ENCODE measurements at regions of chr5 and their contacts with region 1.

Region 1: GRCh38 chr5:113813466-113813865 is 300.0 kb downstream of the YTHDC2 start:
- DNase-seq: no peak
- H3K4me3 ChIP-seq: no peak overlapping the region
- H3K27ac ChIP-seq: no peak overlapping the region
- H3K4me1 ChIP-seq: peaks cover 12% of the 10 kb centered on the region
- H3K27me3 ChIP-seq: no peaks in the 10 kb centered on the region
- CTCF ChIP-seq: no peak
- POLR2A ChIP-seq: no peak

Region 2: DNA sequence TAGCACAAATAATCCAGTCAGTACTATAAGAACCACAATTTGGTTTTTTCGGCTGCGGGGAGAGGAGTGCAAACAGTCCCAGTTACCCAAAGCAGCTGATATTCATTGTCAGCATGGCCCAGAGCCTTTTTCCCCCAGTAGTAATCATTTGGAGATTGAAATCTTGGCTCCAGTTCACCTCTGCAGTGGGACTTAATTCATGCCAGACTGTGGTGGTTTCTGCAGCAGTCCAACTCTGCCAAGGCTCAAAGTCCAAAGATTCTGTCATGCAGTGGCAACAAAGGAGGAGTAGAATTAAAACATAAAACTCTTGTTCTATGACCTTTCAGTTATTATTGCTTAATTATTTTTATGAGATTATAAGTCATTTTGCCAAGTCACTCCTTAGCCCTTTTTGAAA is 1381.2 kb after region 1 on chr5:
- intact Hi-C with region 1: loop called (anchors 10 kb)
- DNase-seq: no peak
- H3K4me3 ChIP-seq: no peak overlapping the region
- H3K27ac ChIP-seq: no peak overlapping the region
- H3K4me1 ChIP-seq: no peaks in the 10 kb centered on the region
- H3K27me3 ChIP-seq: no peaks in the 10 kb centered on the region
- CTCF ChIP-seq: no peak
- POLR2A ChIP-seq: no peak